Dendritic cell treated with granulocyte-macrophage colony-stimulating factor and Interleukin-4, amounts not matched to agents 40 ng/mL and 50 ng/mL, for 4 days (primary cell): ENCODE measurements at regions of chr5 and their contacts with region 1.

Region 1: DNA sequence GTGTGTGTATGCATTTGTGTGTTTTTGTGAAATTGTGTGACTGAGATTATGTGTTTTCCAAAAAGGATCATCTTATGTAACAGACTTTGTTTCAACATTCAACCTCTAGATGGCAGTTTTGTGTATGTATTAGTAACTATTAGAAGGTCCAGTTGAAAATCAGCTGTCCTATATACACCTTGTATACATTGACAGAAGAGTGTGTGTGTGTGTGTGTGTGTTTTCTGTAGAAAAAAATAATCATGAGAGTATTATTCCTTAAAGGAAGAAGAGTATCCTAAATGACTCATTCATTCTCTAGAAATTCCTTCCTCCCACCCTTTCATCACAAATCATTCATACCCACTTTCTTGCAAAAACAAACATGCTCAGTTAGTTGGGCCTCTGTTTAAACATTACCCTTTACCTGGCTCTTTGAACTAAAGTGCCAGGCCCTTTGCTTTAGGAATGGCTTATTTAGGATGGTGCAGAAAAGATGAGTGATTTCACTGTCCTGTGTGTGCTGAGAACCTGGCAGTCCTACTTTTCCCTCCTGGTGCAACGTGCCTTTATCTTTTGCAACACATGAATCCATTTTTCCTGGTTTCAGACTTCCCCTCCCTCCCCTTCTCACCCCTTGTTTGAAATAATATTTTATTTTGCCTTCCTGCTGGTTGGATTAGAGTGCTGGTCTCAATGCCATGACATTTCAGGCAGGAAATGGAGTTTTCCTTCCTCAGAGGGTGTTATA is 152.2 kb downstream of the ARHGAP26 start:
- H3K4me3 Mint-ChIP-seq: no peak overlapping the region
- H3K27ac Mint-ChIP-seq: no peak overlapping the region
- H3K4me1 Mint-ChIP-seq: peaks cover 37% of the 10 kb centered on the region
- H3K27me3 Mint-ChIP-seq: no peaks in the 10 kb centered on the region

Region 2: DNA sequence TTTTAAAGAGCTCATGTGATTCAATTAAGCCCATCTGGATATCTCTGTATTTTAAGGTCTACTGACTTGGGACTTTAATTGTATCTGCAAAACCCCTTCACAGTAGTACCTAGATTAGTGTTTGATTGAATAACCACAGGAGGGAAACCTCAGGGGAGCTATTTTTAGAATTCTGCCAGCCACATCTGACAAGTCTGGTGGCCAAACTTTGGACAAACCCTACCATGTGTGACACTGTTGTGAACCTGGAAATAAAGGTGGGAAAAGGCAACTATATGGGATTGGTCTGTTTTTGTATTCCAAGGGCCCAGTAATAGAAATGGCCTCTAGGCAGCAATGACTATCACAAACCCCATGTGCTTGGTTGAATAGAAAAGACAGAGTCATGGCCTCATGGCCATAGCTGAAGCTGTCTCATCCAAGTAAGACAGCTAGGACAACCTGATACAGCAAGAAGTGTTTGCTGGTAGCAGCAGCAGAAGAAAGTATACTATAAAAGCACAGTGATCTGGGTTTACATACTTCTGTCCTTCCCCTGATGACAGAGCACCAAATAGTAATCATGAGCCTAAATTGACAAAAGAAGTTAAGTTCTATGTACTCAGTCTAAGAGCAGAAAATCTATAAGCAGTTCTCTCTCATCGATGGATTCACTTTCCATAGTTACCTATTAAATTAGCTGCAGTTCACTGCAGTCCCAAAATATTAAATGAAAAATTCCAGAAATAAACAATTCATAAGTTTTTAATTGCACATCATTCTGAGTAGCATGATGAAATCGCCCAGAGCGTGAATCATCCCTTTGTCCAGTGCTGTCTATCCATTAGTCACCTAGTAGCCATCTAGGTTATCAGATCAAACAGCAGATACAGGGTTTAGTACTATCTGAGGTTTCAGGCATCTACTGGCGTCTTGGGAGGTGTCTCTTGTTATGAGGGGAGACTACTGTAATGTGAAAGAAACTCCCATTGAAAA is 37.6 kb after region 1 on chr5:
- intact Hi-C with region 1: loop called (anchors 5 kb)
- H3K4me3 Mint-ChIP-seq: no peak overlapping the region
- H3K27ac Mint-ChIP-seq: no peak overlapping the region
- H3K4me1 Mint-ChIP-seq: peaks cover 46% of the 10 kb centered on the region
- H3K27me3 Mint-ChIP-seq: no peaks in the 10 kb centered on the region

Region 3: DNA sequence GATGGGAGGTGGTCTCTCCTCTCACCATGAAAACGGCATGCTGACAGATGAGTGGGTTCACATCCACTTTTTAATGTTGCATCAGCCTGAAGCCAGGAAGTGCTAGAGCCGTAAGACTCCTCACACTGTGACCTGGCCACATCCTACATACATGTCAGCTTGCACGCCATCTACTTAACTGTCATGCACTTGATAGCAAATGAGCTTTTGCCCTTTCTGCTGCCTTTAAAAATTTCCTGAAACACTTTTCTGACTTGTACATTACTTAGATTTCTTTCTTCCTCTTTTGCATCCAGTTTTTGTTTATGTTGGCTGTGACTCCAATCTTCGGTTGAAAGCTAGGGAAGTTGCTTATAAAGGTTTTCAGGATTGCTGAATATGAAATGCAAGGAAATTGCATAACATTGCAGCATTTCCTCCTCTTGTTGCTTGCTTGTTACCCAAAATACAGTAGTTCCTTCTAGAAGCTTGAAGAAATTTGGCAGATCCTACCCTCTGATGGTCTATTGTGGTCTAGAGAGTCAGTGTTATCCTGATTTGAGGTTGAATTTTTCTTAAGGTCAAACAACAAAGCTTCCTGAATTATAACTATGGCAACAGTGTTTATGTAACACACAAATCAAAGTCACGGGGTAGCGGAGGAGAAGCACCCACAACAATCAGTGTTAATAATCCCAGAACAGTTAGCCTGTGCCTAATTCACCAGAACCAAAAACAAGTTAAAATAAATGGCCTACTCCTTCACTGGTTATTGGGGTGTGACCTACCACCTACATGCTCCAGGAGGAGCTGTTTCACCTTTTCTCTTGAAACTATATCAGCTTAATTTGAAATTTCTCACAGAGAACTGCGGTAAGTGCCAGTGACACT is 80.3 kb after region 1 on chr5:
- intact Hi-C with region 1: loop called (anchors 5 kb)
- H3K4me3 Mint-ChIP-seq: peak overlapping the region; percentile 13
- H3K27ac Mint-ChIP-seq: peak overlapping the region; percentile 90
- H3K4me1 Mint-ChIP-seq: peaks cover 81% of the 10 kb centered on the region
- H3K27me3 Mint-ChIP-seq: no peaks in the 10 kb centered on the region

Region 4: GRCh38 chr5:143395638-143396352 is 473.4 kb after region 1 on chr5:
- intact Hi-C with region 1: loop called (anchors 10 kb)
- H3K4me3 Mint-ChIP-seq: peak overlapping the region; percentile 6
- H3K27ac Mint-ChIP-seq: no peak overlapping the region
- H3K4me1 Mint-ChIP-seq: peaks cover 26% of the 10 kb centered on the region
- H3K27me3 Mint-ChIP-seq: no peaks in the 10 kb centered on the region